ENCODE measurements at regions of chr12 and their contacts with region 1.

Region 1: GRCh38 chr12:131432532-131433260 is 278.2 kb upstream of the SFSWAP start:
- DNase-seq: no peak
- H3K4me3 ChIP-seq: no peak overlapping the region
- H3K27ac ChIP-seq: no peak overlapping the region
- H3K4me1 ChIP-seq: no peaks in the 10 kb centered on the region
- H3K27me3 ChIP-seq: no peaks in the 10 kb centered on the region
- CTCF ChIP-seq: no peak

Region 2: DNA sequence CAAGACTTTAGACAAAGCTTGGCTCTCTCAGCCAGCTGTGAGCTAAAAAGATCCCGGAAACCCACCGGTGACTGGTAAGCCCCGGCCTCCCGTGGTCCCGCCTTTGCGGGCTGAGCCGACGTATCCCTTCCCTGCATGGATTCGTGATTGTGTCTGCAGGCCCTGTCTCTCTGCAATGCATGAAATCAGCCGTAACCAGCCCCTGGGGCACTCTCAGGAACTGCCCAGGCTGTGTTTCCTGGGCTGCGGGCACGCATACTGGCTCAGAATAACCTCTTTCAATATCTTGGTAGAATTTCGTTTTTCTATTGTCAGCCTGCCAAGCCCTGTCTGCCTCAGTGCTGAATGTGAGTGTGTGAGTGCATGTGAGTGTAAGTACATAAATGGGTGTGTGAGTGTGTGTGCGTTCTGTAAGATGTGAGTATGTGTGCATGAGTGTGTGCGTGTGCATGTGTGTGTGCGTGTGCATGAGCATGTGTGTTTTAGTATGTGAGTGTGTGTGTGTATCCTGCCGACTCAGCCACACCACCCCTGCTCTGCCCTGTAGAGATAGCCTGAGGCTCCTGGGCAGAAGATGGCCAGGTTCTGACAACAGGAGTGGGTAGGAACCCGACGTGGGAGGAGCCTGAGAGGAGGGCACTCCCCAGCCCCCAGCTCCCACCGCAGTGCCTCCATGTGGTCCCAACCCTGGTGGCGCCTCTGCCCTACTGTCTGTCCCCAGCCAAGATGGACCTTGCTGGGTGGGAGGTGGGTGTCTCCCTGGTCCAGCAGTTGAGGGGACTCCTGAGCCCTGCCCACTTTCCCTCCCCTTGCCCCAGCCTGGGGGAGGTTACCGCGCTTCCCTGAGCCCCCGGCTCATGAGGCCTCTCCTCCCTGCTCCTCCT is 210.2 kb before region 1 on chr12:
- CTCF ChIA-PET with region 1: no interaction called
- dilution Hi-C with region 1: loop called (anchors 10 kb)
- in situ Hi-C with region 1: no loop called
- intact Hi-C with region 1: no loop called
- DNase-seq: no peak
- H3K4me3 ChIP-seq: no peak overlapping the region
- H3K27ac ChIP-seq: no peak overlapping the region
- H3K4me1 ChIP-seq: no peaks in the 10 kb centered on the region
- H3K27me3 ChIP-seq: no peaks in the 10 kb centered on the region
- CTCF ChIP-seq: no peak

Region 3: DNA sequence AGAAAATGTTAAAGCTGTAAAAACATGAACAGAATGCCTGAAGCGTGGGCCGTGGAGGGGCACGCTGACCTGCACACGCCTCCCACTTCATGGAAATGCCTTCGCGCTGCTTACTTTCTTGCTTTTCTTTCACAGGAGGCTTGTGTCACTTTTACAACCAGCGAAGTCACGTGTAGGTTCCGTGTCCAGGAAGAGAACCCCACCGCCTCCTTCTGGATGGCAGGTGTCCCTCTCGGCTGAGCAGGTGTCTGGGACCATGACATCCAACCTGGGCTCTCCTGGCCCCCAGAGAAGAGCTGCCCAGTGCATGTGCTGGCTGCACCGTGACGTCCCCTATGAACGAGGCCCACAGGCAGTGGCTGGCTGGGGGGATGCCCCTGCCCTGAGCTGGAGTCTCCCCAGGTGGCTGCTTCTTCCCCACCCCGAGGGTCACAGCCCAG is 66.9 kb before region 1 on chr12:
- CTCF ChIA-PET with region 1: no interaction called
- dilution Hi-C with region 1: loop called (anchors 5 kb)
- in situ Hi-C with region 1: no loop called
- intact Hi-C with region 1: no loop called
- DNase-seq: no peak
- H3K4me3 ChIP-seq: no peak overlapping the region
- H3K27ac ChIP-seq: no peak overlapping the region
- H3K4me1 ChIP-seq: no peaks in the 10 kb centered on the region
- H3K27me3 ChIP-seq: no peaks in the 10 kb centered on the region
- CTCF ChIP-seq: no peak

Region 4: DNA sequence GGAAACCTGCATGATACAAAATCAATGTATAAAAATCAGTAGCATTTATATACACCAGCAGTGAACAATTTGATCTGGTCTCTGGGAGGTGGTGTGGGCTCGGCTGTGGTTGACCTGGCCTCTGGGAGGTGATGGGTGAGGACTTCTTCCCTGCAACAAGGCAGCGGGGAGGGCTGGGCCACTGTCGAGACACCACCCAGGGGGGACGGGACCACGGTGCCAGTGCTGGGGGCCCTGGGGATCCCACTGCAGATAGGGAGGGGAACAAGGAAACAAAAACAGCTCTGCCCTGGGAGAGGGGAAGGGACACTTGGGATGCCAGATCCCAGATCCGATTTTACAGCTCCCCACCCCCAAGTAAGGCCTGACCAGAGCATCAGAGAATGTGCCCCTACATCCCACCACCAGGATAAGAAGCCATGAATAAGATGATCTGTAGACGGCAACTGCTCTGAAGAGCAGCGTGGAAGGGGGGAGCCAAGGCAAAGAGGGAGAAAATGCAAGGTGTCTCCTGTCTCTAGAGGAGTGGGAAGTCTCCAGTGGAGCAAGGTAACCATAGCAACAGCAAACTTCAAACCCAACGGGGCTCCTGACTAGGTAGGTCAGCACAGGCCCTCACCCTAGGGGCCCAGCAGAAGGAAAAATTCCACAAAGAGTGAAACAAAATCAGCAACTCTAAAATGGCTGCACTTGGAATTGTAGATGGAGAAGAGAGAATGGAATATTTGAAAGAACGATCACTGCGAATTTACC is 88.8 kb after region 1 on chr12:
- CTCF ChIA-PET with region 1: no interaction called
- dilution Hi-C with region 1: no loop called
- in situ Hi-C with region 1: no loop called
- intact Hi-C with region 1: no loop called
- DNase-seq: no peak
- H3K4me3 ChIP-seq: no peak overlapping the region
- H3K27ac ChIP-seq: no peak overlapping the region
- H3K4me1 ChIP-seq: no peaks in the 10 kb centered on the region
- H3K27me3 ChIP-seq: no peaks in the 10 kb centered on the region
- CTCF ChIP-seq: no peak

Measured in mammary epithelial cell (primary cell).